Activated T-helper 1 cell treated with anti-CD3 and anti-CD28 coated beads, Interleukin-12 subunit alpha, Interleukin-12 subunit beta, Interleukin-2, Interleukin-4 antibody, amounts not matched to agents 30 ng/mL and 10 ng/mL and 1 ng/mL, durations not matched to agents 14 hours and 24 hours and 36 hours (primary cell): ENCODE measurements at regions of chr2 and their contacts with region 1.

Region 1: GRCh38 chr2:128321784-128322714 is 3.4 kb upstream of the HS6ST1 start:
- DNase-seq: peak; percentile 79
- H3K4me3 Mint-ChIP-seq: peak overlapping the region; percentile 76
- H3K27ac Mint-ChIP-seq: peak overlapping the region; percentile 23
- H3K4me1 Mint-ChIP-seq: peaks cover 6% of the 10 kb centered on the region
- H3K27me3 Mint-ChIP-seq: peaks cover 6% of the 10 kb centered on the region

Region 2: DNA sequence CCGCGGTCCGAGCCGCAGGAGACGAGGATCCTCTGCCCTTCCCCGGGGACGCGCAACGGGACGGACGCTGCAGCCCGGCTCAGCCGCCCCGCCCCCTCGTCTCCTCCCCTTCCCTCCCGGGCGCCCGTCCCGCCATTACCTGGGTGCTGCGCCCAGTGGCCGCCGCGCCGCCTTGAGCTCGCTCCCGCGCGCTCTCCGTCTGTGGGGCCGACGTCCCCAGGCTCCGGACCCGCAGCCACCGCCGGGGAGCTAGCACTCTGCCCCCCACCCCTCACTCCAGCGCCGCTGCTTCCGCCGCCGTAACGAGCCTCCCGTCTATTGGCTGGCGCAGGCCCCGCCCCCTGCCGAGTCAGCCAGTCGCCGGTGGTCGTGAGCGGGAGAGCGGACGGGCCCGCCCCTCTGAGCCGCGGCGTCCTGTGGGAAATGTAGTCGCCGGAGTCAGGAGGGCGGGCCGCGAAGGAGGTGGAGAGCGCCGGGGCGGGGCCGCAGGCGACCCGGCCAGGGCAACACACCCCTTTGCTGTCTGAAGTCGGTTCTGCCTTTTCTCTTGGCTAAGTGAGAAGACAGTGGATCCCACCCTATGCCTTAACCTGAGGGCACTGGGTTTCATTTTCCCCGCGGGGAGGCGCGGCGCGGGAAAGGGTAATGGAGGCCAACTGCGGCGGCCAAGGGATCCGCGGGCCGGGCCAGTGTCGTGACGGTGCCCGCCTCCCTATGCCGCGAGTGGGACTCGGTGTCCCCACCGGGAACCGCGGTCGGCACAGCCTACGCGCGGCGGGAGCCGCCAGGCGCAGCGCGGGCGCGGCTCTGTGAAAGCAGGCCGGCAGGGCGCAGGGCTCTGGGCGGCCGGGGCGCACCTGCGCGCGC is 294.0 kb before region 1 on chr2 and contains the start of gene SAP130:
- intact Hi-C with region 1: loop called (anchors 1 kb)
- DNase-seq: peak; percentile 99
- H3K4me3 Mint-ChIP-seq: peak within 1 kb of the TSS; percentile 99
- H3K27ac Mint-ChIP-seq: peak within 1 kb of the TSS; percentile 93
- H3K4me1 Mint-ChIP-seq: peaks cover 23% of the 10 kb centered on the region
- H3K27me3 Mint-ChIP-seq: peaks cover 4% of the 10 kb centered on the region
- total RNA-seq, gene SAP130: 30.9 and 31.5 TPM in 2 replicates

Region 3: GRCh38 chr2:128178650-128179460 is 143.2 kb before region 1 on chr2:
- intact Hi-C with region 1: loop called (anchors 5 kb)
- DNase-seq: peak; percentile 19
- H3K4me3 Mint-ChIP-seq: no peak overlapping the region
- H3K27ac Mint-ChIP-seq: peak overlapping the region; percentile 37
- H3K4me1 Mint-ChIP-seq: peaks cover 9% of the 10 kb centered on the region
- H3K27me3 Mint-ChIP-seq: no peaks in the 10 kb centered on the region

Region 4: GRCh38 chr2:128282976-128283810 is 38.9 kb before region 1 on chr2:
- intact Hi-C with region 1: no loop called
- DNase-seq: no peak
- H3K4me3 Mint-ChIP-seq: no peak overlapping the region
- H3K27ac Mint-ChIP-seq: no peak overlapping the region
- H3K4me1 Mint-ChIP-seq: peaks cover 7% of the 10 kb centered on the region
- H3K27me3 Mint-ChIP-seq: no peaks in the 10 kb centered on the region

Region 5: GRCh38 chr2:128473175-128474035 is 151.4 kb after region 1 on chr2:
- intact Hi-C with region 1: loop called (anchors 5 kb)
- DNase-seq: peak; percentile 26
- H3K4me3 Mint-ChIP-seq: peak overlapping the region; percentile 67
- H3K27ac Mint-ChIP-seq: peak overlapping the region; percentile 86
- H3K4me1 Mint-ChIP-seq: peaks cover 20% of the 10 kb centered on the region
- H3K27me3 Mint-ChIP-seq: peaks cover 6% of the 10 kb centered on the region

Region 6: DNA sequence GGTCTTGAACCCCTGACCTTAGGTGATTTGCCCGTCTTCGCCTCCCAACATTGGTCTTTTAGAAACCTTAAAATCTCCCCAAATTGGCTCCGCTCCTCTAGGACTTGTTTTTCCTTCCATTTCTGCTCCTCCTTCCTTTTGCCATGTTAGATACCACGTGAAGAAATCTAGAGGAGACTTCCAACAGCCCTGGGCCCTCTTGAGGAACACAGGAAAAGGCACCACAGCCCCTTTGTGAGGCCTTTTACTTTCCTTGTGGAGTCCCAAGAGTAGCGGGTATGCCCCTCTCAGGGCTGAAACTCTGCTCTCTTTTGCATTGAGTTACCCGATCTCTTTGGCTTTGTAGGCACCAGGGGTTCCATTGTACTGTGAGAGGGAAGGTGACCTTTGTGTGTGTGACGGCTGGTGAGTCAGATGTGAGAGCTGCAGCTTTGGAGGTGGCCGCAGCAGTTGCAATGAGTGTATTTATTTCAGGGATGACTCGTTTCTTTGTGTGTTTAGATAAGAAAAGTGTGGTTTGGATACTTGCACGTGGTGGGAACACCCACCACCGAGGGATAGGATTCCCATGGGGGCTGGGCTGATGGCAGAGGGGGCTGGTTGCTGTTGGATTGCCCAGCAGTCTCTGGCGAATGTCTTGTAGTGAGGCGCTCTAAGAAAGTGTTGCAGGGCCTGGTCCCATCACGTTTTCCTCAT is 215.0 kb after region 1 on chr2:
- intact Hi-C with region 1: loop called (anchors 5 kb)
- DNase-seq: no peak
- H3K4me3 Mint-ChIP-seq: no peak overlapping the region
- H3K27ac Mint-ChIP-seq: peak overlapping the region; percentile 4
- H3K4me1 Mint-ChIP-seq: peaks cover 24% of the 10 kb centered on the region
- H3K27me3 Mint-ChIP-seq: peaks cover 22% of the 10 kb centered on the region

Region 7: DNA sequence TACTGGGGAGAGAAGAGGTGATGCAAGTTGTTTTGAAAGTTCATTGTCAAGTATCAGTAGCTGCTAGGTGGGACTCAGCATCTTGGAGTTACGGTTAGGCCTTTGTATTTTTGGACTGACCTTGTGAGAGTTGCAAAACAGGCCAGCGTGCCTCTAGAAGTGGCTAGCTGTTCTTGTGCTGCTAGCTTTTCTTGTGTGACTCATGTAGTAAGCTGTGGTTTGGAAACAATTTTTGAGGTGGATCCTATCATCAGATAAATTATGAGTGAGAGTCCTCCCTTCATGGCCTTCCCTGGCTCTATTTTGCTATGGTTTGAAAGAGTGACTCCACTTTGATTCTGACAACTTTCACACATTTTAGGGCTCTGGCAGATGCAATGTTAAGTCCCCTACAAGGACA is 405.9 kb after region 1 on chr2:
- intact Hi-C with region 1: loop called (anchors 5 kb)
- DNase-seq: no peak
- H3K4me3 Mint-ChIP-seq: no peak overlapping the region
- H3K27ac Mint-ChIP-seq: peak overlapping the region; percentile 14
- H3K4me1 Mint-ChIP-seq: peaks cover 26% of the 10 kb centered on the region
- H3K27me3 Mint-ChIP-seq: peaks cover 16% of the 10 kb centered on the region

Region 8: GRCh38 chr2:129849559-129850160 is 1527.6 kb after region 1 on chr2:
- intact Hi-C with region 1: loop called (anchors 10 kb)
- DNase-seq: no peak
- H3K4me3 Mint-ChIP-seq: no peak overlapping the region
- H3K27ac Mint-ChIP-seq: no peak overlapping the region
- H3K4me1 Mint-ChIP-seq: no peaks in the 10 kb centered on the region
- H3K27me3 Mint-ChIP-seq: peaks cover 10% of the 10 kb centered on the region